Esophagus muscularis mucosa (tissue), 4 donors: ENCODE measurements at regions of chr5 and their contacts with region 1.

Region 1: GRCh38 chr5:102911973-102912372 is 156.9 kb downstream of the PAM start:
- DNase-seq: no peak
- H3K4me3 ChIP-seq: no peak overlapping the region
- H3K27ac ChIP-seq: peak overlapping the region; percentile 2 to 52 (median 35)
- H3K4me1 ChIP-seq: peaks cover 24 to 31% (median 28%) of the 10 kb centered on the region in 4 donors
- H3K27me3 ChIP-seq: no peaks in the 10 kb centered on the region
- CTCF ChIP-seq: no peak
- EP300 ChIP-seq: no peak
- POLR2A ChIP-seq: no peak

Region 2: DNA sequence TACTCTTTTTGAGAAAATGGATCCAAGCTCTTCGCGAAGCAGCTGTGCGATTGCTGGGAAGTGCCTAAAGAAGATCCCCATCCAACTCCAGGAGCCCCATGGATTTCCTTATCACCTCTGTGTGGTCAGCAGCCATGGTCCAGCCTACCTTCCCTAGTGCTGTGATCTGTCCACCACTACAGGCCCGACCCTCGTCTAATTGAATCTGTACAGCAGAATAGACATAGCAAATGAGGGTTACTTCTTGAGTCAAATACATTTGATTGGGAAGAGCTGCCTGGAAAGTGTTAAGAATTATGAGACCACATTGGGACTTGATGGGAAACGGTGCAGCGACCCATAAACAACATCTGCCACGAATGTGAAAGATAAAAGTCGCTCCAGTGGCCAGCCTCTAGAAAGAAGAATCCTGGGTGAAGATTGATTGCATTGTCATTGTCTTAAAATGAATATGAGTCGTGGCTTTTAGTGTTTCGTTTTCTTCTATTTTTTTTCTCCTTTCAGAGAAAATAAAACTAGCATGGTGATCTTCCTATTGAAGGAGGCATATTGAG is 38.5 kb before region 1 on chr5:
- intact Hi-C with region 1: loop called (anchors 5 kb)
- DNase-seq: no peak
- H3K4me3 ChIP-seq: no peak overlapping the region
- H3K27ac ChIP-seq: no peak overlapping the region
- H3K4me1 ChIP-seq: peaks cover 6 to 19% (median 14%) of the 10 kb centered on the region in 4 donors
- H3K27me3 ChIP-seq: no peaks in the 10 kb centered on the region
- CTCF ChIP-seq: no peak
- EP300 ChIP-seq: no peak
- POLR2A ChIP-seq: no peak